ENCODE measurements at regions of chr10 and their contacts with region 1.

Region 1: GRCh38 chr10:61903221-61903927 is 1.9 kb downstream of the ARID5B start:
- DNase-seq: peak; percentile 55
- ATAC-seq: peak; percentile 43
- H3K4me3 ChIP-seq: peak overlapping the region; percentile 60
- H3K27ac ChIP-seq: peak overlapping the region; percentile 99
- H3K4me1 ChIP-seq: peaks cover 4% of the 10 kb centered on the region; the same call in 1 of the 2 replicates
- H3K27me3 ChIP-seq: no peaks in the 10 kb centered on the region
- CTCF ChIP-seq: 0 out of 2 replicates have a peak, but pooled peaks have one; percentile 11
- POLR2A ChIP-seq: no peak
- RAD21 ChIP-seq: peak; percentile 1; the same call in 1 of the 2 replicates

Region 2: DNA sequence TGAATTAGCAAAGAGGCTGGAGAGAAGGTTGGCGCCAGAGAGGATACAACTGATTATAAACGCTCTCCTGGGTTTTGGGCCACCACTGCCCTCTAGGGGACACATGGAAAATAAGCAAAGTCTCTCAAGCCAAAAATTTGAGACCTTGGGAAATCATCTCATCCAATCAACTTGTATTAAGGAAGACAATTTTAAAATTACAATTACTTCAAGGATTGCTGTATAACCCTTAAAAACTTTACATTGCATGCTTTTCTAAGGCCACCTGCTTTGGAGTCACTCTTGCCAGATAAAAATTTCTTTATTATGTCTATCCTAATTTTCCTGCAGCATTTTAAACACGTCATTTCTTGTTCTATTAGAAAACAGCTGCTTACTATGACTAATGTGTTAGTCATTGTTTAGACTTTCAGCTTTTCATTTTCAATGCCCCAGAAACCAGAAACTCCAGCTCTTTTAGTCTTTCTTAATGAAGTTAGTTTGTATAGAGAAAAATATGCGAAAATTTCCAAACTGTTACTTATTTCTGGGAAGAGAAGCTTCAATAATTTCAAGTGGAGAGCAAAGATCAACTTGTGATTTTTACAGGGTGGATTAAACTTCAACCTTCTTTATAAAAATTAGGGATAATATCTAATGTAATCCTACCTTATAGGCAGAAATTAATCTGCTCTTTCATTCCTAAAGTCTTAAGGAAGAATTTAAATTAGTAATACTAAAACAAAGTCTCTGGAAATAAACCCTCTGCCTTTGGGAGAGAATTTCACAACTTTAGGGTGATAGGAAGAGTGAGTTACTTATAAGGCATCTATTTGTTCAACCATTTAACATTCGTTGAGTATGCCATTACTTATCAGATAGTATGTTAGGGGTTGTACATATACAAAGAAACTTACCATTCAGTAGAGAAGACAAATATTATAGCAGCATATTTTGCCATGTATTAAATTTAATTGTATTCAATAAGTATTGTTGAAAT is 938.8 kb before region 1 on chr10:
- CTCF ChIA-PET with region 1: no interaction called
- POLR2A ChIA-PET with region 1: no interaction called
- dilution Hi-C with region 1: no loop called
- in situ Hi-C with region 1: no loop called
- intact Hi-C with region 1: loop called (anchors 10 kb)
- DNase-seq: peak; percentile 91
- ATAC-seq: peak; percentile 76
- H3K4me3 ChIP-seq: no peak overlapping the region
- H3K27ac ChIP-seq: peak overlapping the region; percentile 49; the same call in 1 of the 2 replicates
- H3K4me1 ChIP-seq: peaks cover 4% of the 10 kb centered on the region; the same call in 1 of the 2 replicates
- H3K27me3 ChIP-seq: no peaks in the 10 kb centered on the region
- CTCF ChIP-seq: peak; percentile 88
- POLR2A ChIP-seq: no peak
- RAD21 ChIP-seq: peak; percentile 78

Region 3: GRCh38 chr10:61452655-61453641 is 450.4 kb before region 1 on chr10 and contains the start of gene TMEM26:
- CTCF ChIA-PET with region 1: no interaction called
- POLR2A ChIA-PET with region 1: no interaction called
- dilution Hi-C with region 1: no loop called
- in situ Hi-C with region 1: no loop called
- intact Hi-C with region 1: loop called (anchors 5 kb)
- DNase-seq: peak; percentile 30
- ATAC-seq: peak; percentile 83
- H3K4me3 ChIP-seq: peak within 1 kb of the TSS; percentile 65
- H3K27ac ChIP-seq: peak within 1 kb of the TSS; percentile 30
- H3K4me1 ChIP-seq: peaks cover 11% of the 10 kb centered on the region; the same call in 1 of the 2 replicates
- H3K27me3 ChIP-seq: peaks cover 3% of the 10 kb centered on the region; the same call in 1 of the 2 replicates
- CTCF ChIP-seq: no peak
- POLR2A ChIP-seq: no peak
- RAD21 ChIP-seq: no peak
- total RNA-seq, gene TMEM26: 0.36 and 0.56 TPM in 2 replicates

Region 4: DNA sequence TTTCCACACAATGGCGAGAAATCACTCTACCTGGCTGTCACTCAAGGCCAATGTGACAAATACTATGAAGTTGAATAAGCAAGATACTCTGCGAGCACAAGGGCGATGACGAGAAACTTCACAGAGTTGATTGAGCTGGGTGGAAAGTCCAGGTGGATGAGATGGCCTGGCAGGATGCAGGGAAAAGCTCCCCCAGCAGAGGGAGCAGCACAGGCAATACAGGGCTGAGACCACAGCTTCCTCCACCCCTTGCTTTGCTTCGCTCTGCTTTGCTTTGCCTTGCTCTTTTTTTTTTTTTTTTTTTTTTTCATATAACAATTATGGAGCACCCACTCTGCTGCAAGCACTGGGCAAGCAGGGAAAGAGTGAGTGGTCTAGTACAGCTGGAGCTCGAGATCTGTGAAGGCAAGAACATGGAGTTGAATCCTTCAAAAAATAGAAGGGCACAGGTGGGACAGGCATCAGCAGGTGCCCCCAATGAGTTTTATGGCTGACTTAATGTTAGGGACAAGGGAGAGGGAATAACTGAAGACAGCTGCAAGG is 152.4 kb before region 1 on chr10:
- CTCF ChIA-PET with region 1: interaction called, 6 read pairs
- POLR2A ChIA-PET with region 1: interaction called, 8 read pairs
- dilution Hi-C with region 1: no loop called
- in situ Hi-C with region 1: no loop called
- intact Hi-C with region 1: loop called (anchors 2 kb)
- DNase-seq: peak; percentile 69
- ATAC-seq: peak; percentile 50
- H3K4me3 ChIP-seq: no peak overlapping the region
- H3K27ac ChIP-seq: peak overlapping the region; percentile 77
- H3K4me1 ChIP-seq: peaks cover 12% of the 10 kb centered on the region
- H3K27me3 ChIP-seq: no peaks in the 10 kb centered on the region
- CTCF ChIP-seq: peak; percentile 70
- POLR2A ChIP-seq: no peak
- RAD21 ChIP-seq: peak; percentile 80

Region 5: DNA sequence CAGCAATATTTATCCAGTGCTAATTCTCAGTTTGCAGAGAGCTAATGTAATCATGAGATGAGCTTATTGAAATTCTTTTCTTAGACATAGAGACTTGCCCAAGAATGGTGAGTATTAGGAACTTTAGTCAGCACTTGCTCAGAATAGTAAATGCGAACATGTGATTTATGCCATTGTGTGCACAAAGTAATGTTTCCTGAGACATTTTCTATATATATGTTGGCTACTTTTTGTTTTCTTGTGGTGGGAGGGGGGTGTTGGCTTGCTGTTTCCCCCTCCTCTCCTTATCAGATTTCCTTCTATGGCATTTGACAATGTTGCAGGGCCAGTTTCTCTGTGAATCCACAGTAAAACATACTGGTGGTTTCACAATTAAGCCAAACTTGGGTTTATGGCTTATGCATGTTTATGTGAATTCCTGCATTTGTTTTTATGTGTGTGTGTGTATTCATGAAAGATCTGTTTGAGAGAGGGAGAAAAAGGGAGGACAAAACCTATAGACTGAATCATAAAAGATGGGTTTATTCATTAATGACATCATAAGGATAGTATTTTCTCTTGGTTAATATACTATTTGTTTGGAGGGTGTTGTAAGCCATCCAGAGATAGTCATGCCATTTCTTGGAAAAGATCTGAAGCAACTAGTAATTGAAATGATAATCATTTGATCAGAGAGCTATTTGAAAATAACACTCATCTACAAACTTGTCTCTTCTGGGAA is 34.4 kb after region 1 on chr10:
- CTCF ChIA-PET with region 1: interaction called, 4 read pairs
- POLR2A ChIA-PET with region 1: interaction called, 3 read pairs
- dilution Hi-C with region 1: no loop called
- in situ Hi-C with region 1: no loop called
- intact Hi-C with region 1: loop called (anchors 2 kb)
- DNase-seq: peak; percentile 68
- ATAC-seq: peak; percentile 45
- H3K4me3 ChIP-seq: no peak overlapping the region
- H3K27ac ChIP-seq: peak overlapping the region; percentile 97; the same call in 1 of the 2 replicates
- H3K4me1 ChIP-seq: peaks cover 18% of the 10 kb centered on the region
- H3K27me3 ChIP-seq: no peaks in the 10 kb centered on the region
- CTCF ChIP-seq: no peak
- POLR2A ChIP-seq: no peak
- RAD21 ChIP-seq: no peak

Region 6: GRCh38 chr10:62121187-62121530 is 217.8 kb after region 1 on chr10:
- CTCF ChIA-PET with region 1: no interaction called
- POLR2A ChIA-PET with region 1: no interaction called
- dilution Hi-C with region 1: no loop called
- in situ Hi-C with region 1: no loop called
- intact Hi-C with region 1: no loop called
- DNase-seq: no peak
- ATAC-seq: no peak
- H3K4me3 ChIP-seq: no peak overlapping the region
- H3K27ac ChIP-seq: no peak overlapping the region
- H3K4me1 ChIP-seq: no peaks in the 10 kb centered on the region
- H3K27me3 ChIP-seq: no peaks in the 10 kb centered on the region
- CTCF ChIP-seq: no peak
- POLR2A ChIP-seq: no peak
- RAD21 ChIP-seq: no peak

Region 7: GRCh38 chr10:62237506-62237905 is 334.1 kb after region 1 on chr10:
- CTCF ChIA-PET with region 1: no interaction called
- POLR2A ChIA-PET with region 1: interaction called, 12 read pairs
- dilution Hi-C with region 1: no loop called
- in situ Hi-C with region 1: loop called (anchors 10 kb)
- intact Hi-C with region 1: no loop called
- DNase-seq: no peak
- ATAC-seq: no peak
- H3K4me3 ChIP-seq: no peak overlapping the region
- H3K27ac ChIP-seq: peak overlapping the region; percentile 77; the same call in 1 of the 2 replicates
- H3K4me1 ChIP-seq: peaks cover 16% of the 10 kb centered on the region
- H3K27me3 ChIP-seq: no peaks in the 10 kb centered on the region
- CTCF ChIP-seq: no peak
- POLR2A ChIP-seq: no peak
- RAD21 ChIP-seq: no peak